ENCODE measurements at regions of chr1 and their contacts with region 1.

Region 1: GRCh38 chr1:235011599-235012435 is 116.8 kb downstream of the TOMM20 start:
- DNase-seq: peak; percentile 90 to 99
- ATAC-seq: peak; percentile 88 to 97 (median 92)
- H3K4me3 ChIP-seq: peak overlapping the region; percentile 21
- H3K4me3 Mint-ChIP-seq: peak overlapping the region; percentile 86
- H3K27ac ChIP-seq: peak overlapping the region; percentile 89
- H3K27ac Mint-ChIP-seq: peak overlapping the region; percentile 91 to 95
- H3K4me1 ChIP-seq: peaks cover 28% of the 10 kb centered on the region
- H3K4me1 Mint-ChIP-seq: peaks cover 37 to 49% of the 10 kb centered on the region in 2 donors
- H3K27me3 ChIP-seq: no peaks in the 10 kb centered on the region
- H3K27me3 Mint-ChIP-seq: no peaks in the 10 kb centered on the region
- CTCF ChIP-seq: no peak

Region 2: GRCh38 chr1:234610348-234611152 is 401.3 kb before region 1 on chr1:
- intact Hi-C with region 1: loop called (anchors 2 kb)
- DNase-seq: peak; percentile 89 to 97
- ATAC-seq: peak; percentile 51 to 77 (median 64)
- H3K4me3 ChIP-seq: peak overlapping the region; percentile 92
- H3K4me3 Mint-ChIP-seq: peak overlapping the region; percentile 94
- H3K27ac ChIP-seq: peak overlapping the region; percentile 99
- H3K27ac Mint-ChIP-seq: peak overlapping the region; percentile 96 to 98
- H3K4me1 ChIP-seq: peaks cover 53% of the 10 kb centered on the region
- H3K4me1 Mint-ChIP-seq: peaks cover 59 to 60% of the 10 kb centered on the region in 2 donors
- H3K27me3 ChIP-seq: no peaks in the 10 kb centered on the region
- H3K27me3 Mint-ChIP-seq: no peaks in the 10 kb centered on the region
- CTCF ChIP-seq: no peak

Region 3: GRCh38 chr1:234772345-234773147 is 239.3 kb before region 1 on chr1:
- intact Hi-C with region 1: loop called (anchors 2 kb)
- DNase-seq: peak; percentile 79 to 94
- ATAC-seq: peak; percentile 86 to 92 (median 91)
- H3K4me3 ChIP-seq: peak overlapping the region; percentile 9
- H3K4me3 Mint-ChIP-seq: peak overlapping the region; percentile 84
- H3K27ac ChIP-seq: peak overlapping the region; percentile 94
- H3K27ac Mint-ChIP-seq: peak overlapping the region in 1 of 2 donors; percentile 99
- H3K4me1 ChIP-seq: peaks cover 71% of the 10 kb centered on the region
- H3K4me1 Mint-ChIP-seq: peaks cover 35 to 43% of the 10 kb centered on the region in 2 donors
- H3K27me3 ChIP-seq: peaks cover 6% of the 10 kb centered on the region
- H3K27me3 Mint-ChIP-seq: peaks cover 0 to 7% of the 10 kb centered on the region in 2 donors
- CTCF ChIP-seq: no peak

Region 4: GRCh38 chr1:234912548-234913277 is 99.1 kb before region 1 on chr1:
- intact Hi-C with region 1: loop called (anchors 1 kb)
- DNase-seq: peak in 1 of 2 donors; percentile 59
- ATAC-seq: peak in 1 of 3 donors; percentile 30
- H3K4me3 ChIP-seq: no peak overlapping the region
- H3K4me3 Mint-ChIP-seq: peak overlapping the region; percentile 55
- H3K27ac ChIP-seq: peak overlapping the region; percentile 64
- H3K27ac Mint-ChIP-seq: peak overlapping the region; percentile 79 to 94
- H3K4me1 ChIP-seq: peaks cover 30% of the 10 kb centered on the region
- H3K4me1 Mint-ChIP-seq: peaks cover 45 to 51% of the 10 kb centered on the region in 2 donors
- H3K27me3 ChIP-seq: no peaks in the 10 kb centered on the region
- H3K27me3 Mint-ChIP-seq: no peaks in the 10 kb centered on the region
- CTCF ChIP-seq: no peak

Region 5: DNA sequence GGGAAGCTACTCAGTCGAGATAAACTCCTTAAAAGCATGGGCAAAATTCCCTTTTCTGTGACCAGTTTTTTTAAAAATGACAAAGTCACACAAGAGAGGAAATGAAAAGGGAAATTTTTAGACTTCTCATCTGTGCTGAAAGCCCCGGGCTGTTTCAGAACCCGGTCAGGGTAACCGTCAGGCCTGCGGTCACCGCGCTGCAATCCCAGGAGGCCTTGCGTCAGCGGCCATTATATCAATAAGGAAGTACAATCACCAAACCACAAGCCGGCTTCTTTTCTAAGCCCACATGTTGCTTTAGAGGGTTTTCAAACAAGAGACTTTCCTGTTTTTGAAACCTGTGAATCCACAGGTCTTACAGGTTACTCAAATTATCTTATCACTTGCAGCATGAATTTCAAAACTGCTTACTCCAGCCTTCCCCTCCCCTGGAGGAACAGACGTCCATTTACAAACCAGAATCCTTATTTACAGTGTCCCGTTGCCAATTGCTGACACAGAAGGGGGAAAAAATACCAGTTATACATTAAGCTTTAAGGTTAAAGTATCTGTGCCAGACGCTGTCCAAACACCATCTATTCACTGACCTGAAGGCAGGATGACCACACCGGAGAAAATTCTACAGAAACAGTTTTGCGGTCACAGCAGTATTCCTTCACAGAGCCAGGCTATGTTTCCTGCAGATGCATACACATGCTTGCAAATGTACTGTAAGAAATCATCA is 48.5 kb before region 1 on chr1:
- intact Hi-C with region 1: loop called (anchors 1 kb)
- DNase-seq: peak; percentile 85 to 96
- ATAC-seq: peak; percentile 84 to 95 (median 93)
- H3K4me3 ChIP-seq: no peak overlapping the region
- H3K4me3 Mint-ChIP-seq: peak overlapping the region; percentile 74
- H3K27ac ChIP-seq: peak overlapping the region; percentile 93
- H3K27ac Mint-ChIP-seq: peak overlapping the region; percentile 92 to 98
- H3K4me1 ChIP-seq: peaks cover 59% of the 10 kb centered on the region
- H3K4me1 Mint-ChIP-seq: peaks cover 41 to 59% of the 10 kb centered on the region in 2 donors
- H3K27me3 ChIP-seq: no peaks in the 10 kb centered on the region
- H3K27me3 Mint-ChIP-seq: no peaks in the 10 kb centered on the region
- CTCF ChIP-seq: no peak

Region 6: GRCh38 chr1:235045034-235045720 is 33.4 kb after region 1 on chr1:
- intact Hi-C with region 1: loop called (anchors 5 kb)
- DNase-seq: no peak
- ATAC-seq: no peak
- H3K4me3 ChIP-seq: no peak overlapping the region
- H3K4me3 Mint-ChIP-seq: peak overlapping the region; percentile 36
- H3K27ac ChIP-seq: no peak overlapping the region
- H3K27ac Mint-ChIP-seq: peak overlapping the region; percentile 43 to 53
- H3K4me1 ChIP-seq: peaks cover 66% of the 10 kb centered on the region
- H3K4me1 Mint-ChIP-seq: peaks cover 40 to 44% of the 10 kb centered on the region in 2 donors
- H3K27me3 ChIP-seq: no peaks in the 10 kb centered on the region
- H3K27me3 Mint-ChIP-seq: no peaks in the 10 kb centered on the region
- CTCF ChIP-seq: no peak

Region 7: GRCh38 chr1:235253219-235253962 is 241.6 kb after region 1 on chr1:
- intact Hi-C with region 1: no loop called
- DNase-seq: peak; percentile 34 to 84
- ATAC-seq: peak; percentile 89 to 95 (median 91)
- H3K4me3 ChIP-seq: no peak overlapping the region
- H3K4me3 Mint-ChIP-seq: no peak overlapping the region
- H3K27ac ChIP-seq: no peak overlapping the region
- H3K27ac Mint-ChIP-seq: peak overlapping the region in 1 of 2 donors; percentile 40
- H3K4me1 ChIP-seq: peaks cover 10% of the 10 kb centered on the region
- H3K4me1 Mint-ChIP-seq: peaks cover 19 to 30% of the 10 kb centered on the region in 2 donors
- H3K27me3 ChIP-seq: no peaks in the 10 kb centered on the region
- H3K27me3 Mint-ChIP-seq: no peaks in the 10 kb centered on the region
- CTCF ChIP-seq: peak; percentile 92

Measured in natural killer cell (primary cell).